BJ (cell line): ENCODE measurements at regions of chr11 and their contacts with region 1.

Region 1: GRCh38 chr11:60970369-60970774 is 1.1 kb upstream of the CD6 start:
- DNase-seq: no peak
- H3K4me3 ChIP-seq: no peak overlapping the region
- H3K27me3 ChIP-seq: peaks cover 16% of the 10 kb centered on the region
- CTCF ChIP-seq: peak; percentile 93

Region 2: DNA sequence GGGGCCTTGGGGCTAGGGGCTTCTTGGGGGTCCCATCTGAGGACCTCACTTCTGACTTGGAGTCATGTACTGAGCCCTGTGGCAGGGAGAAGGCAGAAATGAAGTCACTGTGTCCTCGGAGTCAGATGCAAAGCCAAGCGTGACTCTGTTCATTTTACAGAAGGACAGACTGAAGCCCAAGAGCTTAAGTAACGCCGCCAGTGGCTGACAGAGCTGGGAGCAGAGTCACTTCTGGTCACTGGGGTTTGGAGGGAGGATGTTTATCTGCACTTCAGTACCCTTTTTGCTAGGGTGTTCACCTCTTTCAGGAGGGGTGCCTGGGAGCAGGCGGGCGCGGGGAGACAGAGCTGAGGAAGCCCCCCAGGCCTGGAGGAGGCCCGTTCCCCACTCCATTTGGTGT is 11.8 kb after region 1 on chr11:
- CTCF ChIA-PET with region 1: interaction called, 10 read pairs
- POLR2A ChIA-PET with region 1: no interaction called
- DNase-seq: no peak
- H3K4me3 ChIP-seq: no peak overlapping the region
- H3K27me3 ChIP-seq: peaks cover 2% of the 10 kb centered on the region
- CTCF ChIP-seq: no peak

Region 3: DNA sequence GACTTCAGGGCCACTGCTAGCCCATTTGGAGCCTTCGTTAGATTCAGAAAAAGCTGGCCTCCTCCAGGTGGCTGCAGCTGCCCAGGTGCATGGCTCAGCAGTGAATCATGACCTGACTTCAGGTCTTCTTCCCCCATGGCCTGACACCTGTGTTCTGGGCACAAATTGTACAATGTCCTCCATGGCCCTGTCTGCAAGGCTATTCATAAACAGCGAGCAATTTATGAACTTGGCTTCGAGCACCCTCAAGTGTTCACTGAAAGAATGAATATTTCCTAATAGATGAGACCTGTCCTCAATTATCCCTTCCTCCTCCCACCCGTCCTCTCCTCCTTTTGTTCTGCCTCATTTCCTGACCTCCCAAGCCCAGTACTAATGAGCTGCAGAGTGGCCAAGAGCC is 203.1 kb after region 1 on chr11:
- CTCF ChIA-PET with region 1: interaction called, 22 read pairs
- POLR2A ChIA-PET with region 1: no interaction called
- DNase-seq: no peak
- H3K4me3 ChIP-seq: no peak overlapping the region
- H3K27me3 ChIP-seq: peaks cover 10% of the 10 kb centered on the region
- CTCF ChIP-seq: peak; percentile 24

Region 4: GRCh38 chr11:61187505-61188130 is 217.2 kb after region 1 on chr11:
- CTCF ChIA-PET with region 1: interaction called, 15 read pairs
- POLR2A ChIA-PET with region 1: no interaction called
- DNase-seq: peak; percentile 16
- H3K4me3 ChIP-seq: no peak overlapping the region
- H3K27me3 ChIP-seq: no peaks in the 10 kb centered on the region; the same call in 1 of the 2 replicates
- CTCF ChIP-seq: peak; percentile 94